Activated T-helper 2 cell treated with anti-CD3 and anti-CD28 coated beads, Interferon-gamma antibody, Interleukin-2, Interleukin-4, amounts not matched to agents 10 μg/mL and 5 μg/mL and 100 μg/mL, durations not matched to agents 14 hours and 24 hours and 36 hours (primary cell): ENCODE measurements at regions of chr13 and their contacts with region 1.

Region 1: GRCh38 chr13:46288570-46289259 is 77.0 kb downstream of the LRRC63 start:
- DNase-seq: no peak
- H3K4me3 Mint-ChIP-seq: no peak overlapping the region
- H3K27ac Mint-ChIP-seq: no peak overlapping the region
- H3K4me1 Mint-ChIP-seq: peaks cover 23% of the 10 kb centered on the region
- H3K27me3 Mint-ChIP-seq: no peaks in the 10 kb centered on the region

Region 2: DNA sequence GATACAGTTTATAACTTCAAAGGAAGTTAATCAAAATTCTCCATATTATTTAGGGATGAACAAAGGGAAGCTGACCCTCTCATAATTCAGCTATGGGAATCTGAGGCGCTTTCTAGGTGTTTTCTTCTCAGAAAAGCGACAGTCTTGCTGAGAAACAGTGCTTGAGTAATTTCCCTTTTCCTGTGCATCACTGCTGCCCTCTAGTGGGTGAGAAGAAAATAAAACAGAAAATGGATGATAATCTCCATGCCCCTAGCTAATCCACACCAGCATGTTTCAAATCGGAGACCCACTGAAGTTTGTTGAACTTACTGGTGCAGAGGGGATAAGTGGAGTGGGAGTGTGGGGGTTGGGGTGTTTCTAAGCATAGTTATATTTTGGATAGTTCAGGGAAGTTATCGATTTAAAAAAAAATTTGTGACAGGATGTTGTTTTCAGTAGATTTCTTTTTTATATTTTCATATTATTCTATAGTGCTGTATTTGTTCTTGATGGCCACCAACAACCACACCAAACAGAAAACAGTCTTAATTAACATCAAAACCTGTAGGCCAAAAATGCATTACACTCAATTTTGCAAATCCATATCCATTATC is 128.1 kb before region 1 on chr13:
- intact Hi-C with region 1: loop called (anchors 2 kb)
- DNase-seq: peak; percentile 45
- H3K4me3 Mint-ChIP-seq: peak overlapping the region; percentile 69
- H3K27ac Mint-ChIP-seq: peak overlapping the region; percentile 92
- H3K4me1 Mint-ChIP-seq: peaks cover 55% of the 10 kb centered on the region
- H3K27me3 Mint-ChIP-seq: no peaks in the 10 kb centered on the region

Region 3: DNA sequence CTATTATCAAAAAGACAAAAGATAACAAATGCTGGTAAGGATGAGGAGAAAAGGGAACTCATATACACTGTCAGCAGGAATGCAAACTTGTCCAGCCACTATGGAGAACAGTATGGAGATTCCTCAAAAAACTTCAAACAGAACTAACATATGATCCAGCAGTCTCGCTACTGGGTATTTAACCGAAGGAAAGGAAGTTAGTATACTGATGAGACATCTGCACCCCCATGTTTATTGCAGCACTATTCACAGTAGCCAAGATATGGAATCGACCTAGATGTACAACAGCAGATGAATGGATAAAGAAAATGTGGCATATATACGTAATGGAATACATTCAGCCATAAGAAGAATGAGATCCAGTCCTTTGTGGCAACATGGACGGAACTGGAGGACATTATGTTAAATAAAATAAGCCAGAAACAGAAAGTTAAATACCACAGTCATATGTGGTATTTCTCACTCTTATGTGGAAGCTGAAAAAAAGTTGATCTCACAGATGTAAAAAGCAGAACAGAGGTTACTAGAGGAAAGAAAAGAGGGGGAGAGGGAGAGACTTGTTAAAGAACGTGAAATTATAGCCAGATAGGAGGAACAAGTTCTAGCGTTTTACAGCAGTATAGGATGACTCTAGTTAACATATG is 15.1 kb after region 1 on chr13:
- intact Hi-C with region 1: no loop called
- DNase-seq: no peak
- H3K4me3 Mint-ChIP-seq: peak overlapping the region; percentile 22
- H3K27ac Mint-ChIP-seq: peak overlapping the region; percentile 41
- H3K4me1 Mint-ChIP-seq: peaks cover 12% of the 10 kb centered on the region
- H3K27me3 Mint-ChIP-seq: no peaks in the 10 kb centered on the region